ENCODE measurements at regions of chr6 and their contacts with region 1.

Region 1: GRCh38 chr6:109073344-109074132 is 21.1 kb downstream of the SESN1 start:
- DNase-seq: no peak
- ATAC-seq: no peak

Region 2: GRCh38 chr6:108432792-108433191 is 640.7 kb before region 1 on chr6:
- intact Hi-C with region 1: no loop called
- DNase-seq: no peak
- ATAC-seq: no peak

Region 3: DNA sequence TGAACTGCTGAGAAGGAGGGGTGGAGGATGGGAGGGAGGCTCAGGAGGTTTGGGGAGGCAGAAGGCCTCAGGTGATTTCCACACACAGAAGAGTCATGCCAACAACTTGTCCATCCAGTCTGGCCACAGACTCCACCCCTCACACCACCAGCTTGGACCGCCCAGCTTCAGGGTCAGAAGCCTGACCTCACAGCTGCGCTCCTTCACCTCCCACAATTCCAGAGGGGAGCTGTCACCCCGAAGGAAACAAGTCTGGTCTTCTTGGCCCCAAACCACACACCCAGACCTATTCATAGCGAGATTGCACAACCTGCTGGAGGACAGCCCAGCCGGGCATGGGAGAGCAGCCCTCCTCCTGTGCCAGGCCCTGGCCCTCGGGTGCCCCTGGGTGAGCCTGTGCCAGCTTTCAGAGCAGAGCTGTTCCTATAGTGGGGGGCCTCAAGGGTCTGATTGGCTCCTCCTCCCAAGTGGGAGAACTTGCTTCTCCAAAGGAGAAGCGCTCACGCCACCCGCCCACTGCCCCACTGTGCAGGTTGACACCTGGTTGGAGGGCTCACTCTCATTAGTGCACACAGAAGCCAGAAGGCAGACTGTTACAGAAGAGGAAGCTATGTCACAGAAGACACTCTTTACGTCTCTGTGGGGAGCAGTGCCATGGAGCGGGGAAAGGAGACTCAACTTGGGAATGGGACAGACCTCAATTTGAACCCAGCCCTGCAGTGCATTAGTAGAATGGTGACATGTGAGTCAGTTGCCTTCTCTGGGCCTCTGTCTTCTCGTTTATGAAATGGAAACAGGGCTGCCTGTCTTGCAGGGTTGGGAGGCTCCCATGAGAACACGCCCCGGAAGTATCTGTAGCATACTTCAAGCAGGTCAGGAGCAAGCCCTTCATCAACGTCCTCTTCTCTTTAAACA is 384.0 kb before region 1 on chr6:
- intact Hi-C with region 1: loop called (anchors 5 kb)
- DNase-seq: peak; percentile 92
- ATAC-seq: peak; percentile 89

Region 4: DNA sequence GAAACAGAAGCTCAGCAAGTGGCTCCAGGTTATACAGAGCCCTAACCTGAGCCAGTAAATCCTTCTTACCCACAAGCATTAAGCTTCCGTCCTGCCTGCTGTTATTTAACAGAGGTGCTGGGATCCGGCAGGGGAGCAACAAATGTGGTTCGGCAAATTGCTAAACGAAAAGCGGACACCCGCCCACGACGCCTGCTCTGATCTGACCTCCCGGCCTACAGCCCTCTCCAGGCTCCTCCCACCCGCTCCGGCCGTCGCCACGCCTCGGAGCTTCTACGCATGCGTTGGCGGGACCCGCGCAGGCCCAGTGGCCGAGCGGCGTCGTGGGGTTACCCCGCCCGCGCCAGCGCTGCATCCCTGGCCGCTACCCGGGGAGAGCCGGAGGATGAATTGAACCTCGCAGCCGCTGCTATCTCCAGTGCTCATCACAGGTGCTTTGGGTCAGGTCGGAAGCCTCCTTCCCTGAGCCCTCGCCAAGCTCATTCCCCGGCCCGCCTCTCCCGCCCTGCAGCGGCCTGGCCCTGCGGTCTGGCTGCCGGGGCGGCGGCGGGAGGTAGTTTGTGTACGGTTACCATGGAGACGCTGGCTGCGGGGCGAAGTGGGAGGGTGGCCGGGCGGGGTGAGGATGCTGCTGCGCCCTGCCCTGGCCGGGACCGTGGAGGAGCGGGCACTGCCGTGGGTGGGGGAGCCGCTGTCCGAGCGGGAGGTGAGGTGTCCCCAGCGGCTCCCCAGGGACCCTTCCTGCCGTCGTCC is 225.2 kb before region 1 on chr6 and contains the start of gene ARMC2:
- intact Hi-C with region 1: loop called (anchors 5 kb)
- DNase-seq: peak; percentile 98
- ATAC-seq: peak; percentile 98
- total RNA-seq, gene ARMC2: 9.5 TPM

Region 5: DNA sequence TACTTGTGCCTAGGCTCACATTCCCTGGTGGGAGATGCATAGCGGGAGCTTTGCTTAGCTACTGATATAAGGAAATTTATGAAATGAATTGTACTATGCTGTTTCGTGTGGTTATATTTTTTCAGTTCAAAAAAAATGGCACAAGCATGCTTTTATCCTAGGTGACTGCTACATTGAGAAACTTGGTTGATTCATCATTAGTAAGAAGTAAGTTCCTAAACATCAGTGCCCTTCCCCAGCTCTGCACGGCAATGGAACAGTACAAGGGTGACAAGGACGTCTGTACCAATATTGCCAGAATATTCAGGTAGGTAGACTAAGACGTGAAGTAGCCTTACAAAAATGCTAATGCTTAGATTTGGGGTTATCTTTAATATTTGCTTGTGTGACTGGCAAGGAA is 145.6 kb before region 1 on chr6:
- intact Hi-C with region 1: no loop called
- DNase-seq: no peak
- ATAC-seq: no peak

Region 6: DNA sequence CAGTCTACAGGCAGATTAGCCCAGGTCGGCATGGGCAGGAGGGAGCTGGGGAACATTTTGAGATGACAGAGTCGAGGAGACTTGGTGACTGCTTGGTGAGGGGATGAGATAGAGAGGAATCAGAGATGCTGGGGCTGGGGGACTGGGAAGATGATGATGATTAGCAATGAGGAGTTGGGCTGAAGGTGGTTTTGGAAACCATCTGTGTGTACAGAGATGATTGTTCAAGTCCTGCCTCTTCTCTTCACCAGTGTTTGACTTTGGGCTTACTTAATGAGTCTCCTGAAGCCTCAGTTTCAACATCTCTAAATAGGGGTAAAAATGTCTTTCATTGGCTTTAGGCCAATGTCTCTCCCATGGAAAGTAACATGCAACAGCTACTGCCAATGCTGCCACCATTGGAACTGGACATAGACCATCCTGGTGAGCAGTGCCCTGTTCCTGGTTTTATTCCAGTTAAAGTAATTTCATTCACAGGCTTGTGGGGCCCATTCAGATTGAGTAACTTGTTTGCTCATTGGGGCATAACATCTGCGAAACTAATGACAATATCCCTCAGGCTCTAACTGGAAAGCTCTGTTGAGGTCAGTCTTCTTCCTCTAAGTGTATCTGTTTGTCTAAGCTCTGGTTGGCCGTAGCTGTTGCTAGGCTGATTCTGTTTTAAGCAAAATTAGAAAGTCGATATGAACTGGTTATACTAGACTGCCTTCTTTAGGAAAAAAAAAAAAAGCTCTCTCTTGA is 126.3 kb before region 1 on chr6:
- intact Hi-C with region 1: loop called (anchors 5 kb)
- DNase-seq: no peak
- ATAC-seq: peak; percentile 41

Measured in Right ventricle myocardium inferior (tissue), 1 donor.